ENCODE measurements at regions of chr14 and their contacts with region 1.

Region 1: DNA sequence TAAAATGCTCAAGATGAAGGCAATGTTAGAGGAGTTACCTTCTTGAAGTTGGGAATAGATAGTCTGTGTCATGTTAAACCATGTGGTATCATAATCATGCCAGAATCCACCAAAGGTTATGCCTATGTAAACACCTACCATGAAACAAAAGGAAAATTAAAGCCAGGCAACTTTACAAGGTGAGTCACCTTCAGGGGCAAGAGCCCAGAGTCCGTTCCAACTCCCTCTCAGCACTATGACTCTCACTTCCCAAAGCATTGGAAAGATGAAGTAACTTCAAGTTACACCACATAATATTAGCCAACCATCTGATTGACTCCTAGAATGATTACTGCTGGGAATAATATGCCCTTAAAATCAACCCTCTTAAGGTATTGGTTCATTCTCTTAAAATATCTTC is 38.5 kb downstream of the CATSPERB start:
- DNase-seq: no peak
- H3K4me3 ChIP-seq: no peak overlapping the region
- H3K27ac ChIP-seq: no peak overlapping the region
- H3K4me1 ChIP-seq: no peaks in the 10 kb centered on the region
- H3K27me3 ChIP-seq: no peaks in the 10 kb centered on the region
- CTCF ChIP-seq: no peak
- EP300 ChIP-seq: no peak
- POLR2A ChIP-seq: no peak

Region 2: GRCh38 chr14:91470216-91470615 is 223.1 kb before region 1 on chr14:
- intact Hi-C with region 1: no loop called
- DNase-seq: no peak
- H3K4me3 ChIP-seq: no peak overlapping the region
- H3K27ac ChIP-seq: no peak overlapping the region
- H3K4me1 ChIP-seq: no peaks in the 10 kb centered on the region
- H3K27me3 ChIP-seq: no peaks in the 10 kb centered on the region
- CTCF ChIP-seq: no peak
- EP300 ChIP-seq: no peak
- POLR2A ChIP-seq: no peak

Region 3: DNA sequence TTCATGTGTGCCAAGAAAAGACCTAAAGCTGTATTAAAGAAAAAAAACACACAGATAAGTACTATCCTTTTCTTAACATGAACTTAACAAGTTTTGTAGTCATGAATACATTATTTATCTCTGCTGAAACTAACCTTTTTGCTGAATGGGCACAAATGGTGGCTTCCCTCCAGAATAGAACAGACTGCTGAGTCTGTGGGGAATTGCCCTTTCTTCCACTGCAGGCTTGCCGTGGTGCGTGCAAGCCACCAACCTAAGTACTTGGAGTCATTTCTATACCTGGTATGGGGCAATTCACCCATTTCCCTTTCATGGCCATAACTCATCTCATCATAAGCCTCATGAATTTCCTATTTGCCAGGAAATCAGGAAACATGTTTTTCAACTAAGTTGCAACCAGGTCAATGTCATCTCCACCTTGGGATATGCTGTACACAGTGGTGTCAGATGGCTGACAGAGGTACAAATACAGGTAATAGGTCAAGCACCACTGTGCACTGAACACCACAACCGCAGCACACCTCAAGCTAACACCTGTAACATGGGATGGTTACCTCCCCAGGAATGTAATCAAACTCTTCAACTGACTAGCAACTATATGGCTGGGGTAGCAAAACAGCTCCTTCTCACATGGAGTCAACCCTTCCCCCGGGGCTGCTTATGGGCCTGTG is 11.3 kb before region 1 on chr14:
- intact Hi-C with region 1: loop called in 1 of 4 experiments (anchors 2 kb)
- DNase-seq: no peak
- H3K4me3 ChIP-seq: no peak overlapping the region
- H3K27ac ChIP-seq: no peak overlapping the region
- H3K4me1 ChIP-seq: no peaks in the 10 kb centered on the region
- H3K27me3 ChIP-seq: no peaks in the 10 kb centered on the region
- CTCF ChIP-seq: no peak
- EP300 ChIP-seq: no peak
- POLR2A ChIP-seq: no peak